ENCODE measurements at regions of chr1 and their contacts with region 1.

Region 1: GRCh38 chr1:225373155-225373554 is 54.7 kb downstream of the LBR start:
- DNase-seq: no peak
- ATAC-seq: no peak
- H3K4me3 ChIP-seq: no peak overlapping the region
- H3K27ac ChIP-seq: no peak overlapping the region
- H3K4me1 ChIP-seq: no peaks in the 10 kb centered on the region
- H3K27me3 ChIP-seq: no peaks in the 10 kb centered on the region
- CTCF ChIP-seq: no peak

Region 2: DNA sequence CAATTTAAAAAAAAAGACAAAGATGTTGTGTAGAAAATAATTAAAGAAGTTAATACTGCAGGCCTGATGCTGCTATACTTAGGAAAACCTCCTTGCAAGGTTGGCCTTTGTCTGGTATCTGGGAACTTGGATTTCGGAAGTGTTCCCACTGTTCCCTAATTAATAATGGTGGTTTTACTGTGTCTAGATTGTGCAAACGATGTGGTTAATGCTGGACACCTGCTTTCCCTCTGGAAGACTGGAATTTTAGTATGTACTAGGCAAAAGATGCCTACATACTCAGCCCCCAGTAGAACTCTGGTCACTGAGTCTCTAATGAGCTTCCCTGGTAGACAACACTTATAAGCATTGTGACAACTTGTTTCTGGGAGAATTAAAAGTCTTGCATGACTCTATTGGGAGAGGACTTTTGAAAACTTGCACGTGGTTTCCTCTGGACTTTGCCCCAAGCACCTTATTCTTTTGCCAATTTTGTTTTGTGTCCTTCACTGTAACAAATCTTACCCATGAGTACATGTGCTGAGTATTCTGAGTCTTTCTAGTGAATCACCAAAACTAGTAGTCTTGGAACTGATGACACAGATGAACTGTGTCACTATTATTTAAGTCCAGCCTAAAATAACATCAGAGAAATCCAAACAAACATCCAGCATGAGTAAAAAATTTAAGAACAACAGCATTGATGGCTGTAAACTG is 895.4 kb after region 1 on chr1:
- CTCF ChIA-PET with region 1: no interaction called
- POLR2A ChIA-PET with region 1: interaction called, 13 read pairs
- intact Hi-C with region 1: no loop called
- DNase-seq: peak; percentile 64
- ATAC-seq: peak; percentile 92
- H3K4me3 ChIP-seq: no peak overlapping the region
- H3K27ac ChIP-seq: peak overlapping the region; percentile 21
- H3K4me1 ChIP-seq: peaks cover 14% of the 10 kb centered on the region
- H3K27me3 ChIP-seq: no peaks in the 10 kb centered on the region
- CTCF ChIP-seq: no peak

Region 3: DNA sequence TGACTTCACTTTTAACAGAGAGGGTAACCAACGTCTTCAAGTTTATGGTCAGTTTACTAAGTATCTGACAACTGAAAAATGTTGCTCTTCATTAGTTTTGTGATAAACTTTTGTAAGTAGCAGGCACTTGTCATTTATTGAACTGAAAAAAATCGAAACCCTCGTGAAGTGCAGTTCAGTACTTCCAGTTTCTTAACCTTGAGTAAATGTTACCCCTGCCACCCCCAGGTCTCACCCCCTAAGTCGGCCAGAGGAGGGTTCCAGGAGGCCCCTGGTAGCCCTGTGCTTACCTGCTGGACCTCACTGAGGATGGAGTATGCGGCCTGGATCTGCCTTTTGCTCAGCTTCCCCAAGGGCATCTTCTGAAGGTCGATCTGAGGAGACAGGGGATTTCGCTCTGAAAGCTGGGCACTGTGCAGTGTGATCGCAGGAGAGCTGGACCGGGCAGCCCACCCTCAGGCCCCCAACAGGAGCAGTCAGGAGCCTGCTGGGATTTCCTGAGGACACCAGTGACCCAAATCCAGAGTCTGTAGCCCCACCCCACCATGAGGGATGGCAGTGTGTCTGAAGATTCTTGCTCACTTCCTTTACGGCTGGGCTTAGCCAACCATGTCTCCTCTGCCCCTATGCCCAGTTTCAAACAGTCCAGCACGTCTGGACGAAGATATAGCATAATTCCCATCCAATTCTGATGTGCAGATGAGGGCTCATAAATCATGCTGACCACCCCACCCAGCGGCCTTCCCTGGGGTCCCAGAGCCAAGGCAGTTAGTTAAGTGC is 997.2 kb after region 1 on chr1:
- CTCF ChIA-PET with region 1: no interaction called
- POLR2A ChIA-PET with region 1: no interaction called
- intact Hi-C with region 1: no loop called
- DNase-seq: no peak
- ATAC-seq: no peak
- H3K4me3 ChIP-seq: no peak overlapping the region
- H3K27ac ChIP-seq: no peak overlapping the region
- H3K4me1 ChIP-seq: 0 out of 2 replicates have a peak, but pooled peaks cover 4% of the 10 kb centered on the region
- H3K27me3 ChIP-seq: no peaks in the 10 kb centered on the region
- CTCF ChIP-seq: no peak

Measured in PC-3 (cell line).